Upper lobe of right lung (tissue), 1 donor: ENCODE measurements at regions of chr4 and their contacts with region 1.

Region 1: GRCh38 chr4:173257732-173258717 is 76.1 kb downstream of the HMGB2 start:
- DNase-seq: peak; percentile 67
- ATAC-seq: peak; percentile 93
- H3K4me3 ChIP-seq: no peak overlapping the region
- H3K27ac ChIP-seq: no peak overlapping the region
- H3K4me1 ChIP-seq: no peaks in the 10 kb centered on the region
- H3K27me3 ChIP-seq: no peaks in the 10 kb centered on the region
- CTCF ChIP-seq: peak; percentile 81

Region 2: GRCh38 chr4:173013232-173013930 is 244.6 kb before region 1 on chr4:
- intact Hi-C with region 1: loop called (anchors 5 kb)
- DNase-seq: no peak
- ATAC-seq: peak; percentile 81
- H3K4me3 ChIP-seq: no peak overlapping the region
- H3K27ac ChIP-seq: no peak overlapping the region
- H3K4me1 ChIP-seq: no peaks in the 10 kb centered on the region
- H3K27me3 ChIP-seq: no peaks in the 10 kb centered on the region
- CTCF ChIP-seq: peak; percentile 73